Sciatic nerve (tissue), 2 donors: ENCODE measurements at regions of chr20 and their contacts with region 1.

Region 1: GRCh38 chr20:11255860-11256259 is 582.1 kb upstream of the JAG1 start:
- DNase-seq: no peak
- ATAC-seq: no peak

Region 2: DNA sequence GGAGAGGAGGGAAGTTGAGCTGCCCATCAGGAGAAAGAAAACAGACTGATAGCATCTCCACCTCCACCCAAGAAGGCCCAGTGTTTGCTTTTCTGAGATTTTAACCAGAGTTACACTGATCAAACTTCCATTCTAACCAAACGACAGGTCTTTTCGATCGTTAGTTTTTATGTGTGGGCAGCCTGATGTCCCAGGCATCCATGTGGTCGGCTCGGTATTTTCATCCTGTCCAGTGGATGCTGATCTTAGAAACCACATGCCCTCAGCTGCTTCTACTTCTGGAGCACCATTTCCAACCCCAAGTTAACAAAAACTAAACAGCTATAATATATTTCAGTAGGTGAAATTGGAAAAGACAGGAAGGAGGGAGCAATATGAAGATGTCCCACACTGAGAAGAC is 45.2 kb before region 1 on chr20:
- intact Hi-C with region 1: loop called (anchors 1 kb)
- DNase-seq: no peak
- ATAC-seq: no peak

Region 3: GRCh38 chr20:11511821-11512220 is 256.0 kb after region 1 on chr20:
- intact Hi-C with region 1: no loop called
- DNase-seq: no peak
- ATAC-seq: no peak